Heart right ventricle (tissue), 16 donors: ENCODE measurements at regions of chr11 and their contacts with region 1.

Region 1: GRCh38 chr11:75867775-75868374 is 52.9 kb downstream of the UVRAG start:
- DNase-seq: peak in 1 of 2 donors; percentile 58
- ATAC-seq: peak; percentile 55 to 80 (median 68)
- H3K4me3 ChIP-seq: no peak overlapping the region
- H3K27ac ChIP-seq: no peak overlapping the region
- H3K4me1 ChIP-seq: peaks cover 5 to 34% (median 23%) of the 10 kb centered on the region in 9 donors
- H3K27me3 ChIP-seq: no peaks in the 10 kb centered on the region
- CTCF ChIP-seq: peak; percentile 72 to 89 (median 85)

Region 2: DNA sequence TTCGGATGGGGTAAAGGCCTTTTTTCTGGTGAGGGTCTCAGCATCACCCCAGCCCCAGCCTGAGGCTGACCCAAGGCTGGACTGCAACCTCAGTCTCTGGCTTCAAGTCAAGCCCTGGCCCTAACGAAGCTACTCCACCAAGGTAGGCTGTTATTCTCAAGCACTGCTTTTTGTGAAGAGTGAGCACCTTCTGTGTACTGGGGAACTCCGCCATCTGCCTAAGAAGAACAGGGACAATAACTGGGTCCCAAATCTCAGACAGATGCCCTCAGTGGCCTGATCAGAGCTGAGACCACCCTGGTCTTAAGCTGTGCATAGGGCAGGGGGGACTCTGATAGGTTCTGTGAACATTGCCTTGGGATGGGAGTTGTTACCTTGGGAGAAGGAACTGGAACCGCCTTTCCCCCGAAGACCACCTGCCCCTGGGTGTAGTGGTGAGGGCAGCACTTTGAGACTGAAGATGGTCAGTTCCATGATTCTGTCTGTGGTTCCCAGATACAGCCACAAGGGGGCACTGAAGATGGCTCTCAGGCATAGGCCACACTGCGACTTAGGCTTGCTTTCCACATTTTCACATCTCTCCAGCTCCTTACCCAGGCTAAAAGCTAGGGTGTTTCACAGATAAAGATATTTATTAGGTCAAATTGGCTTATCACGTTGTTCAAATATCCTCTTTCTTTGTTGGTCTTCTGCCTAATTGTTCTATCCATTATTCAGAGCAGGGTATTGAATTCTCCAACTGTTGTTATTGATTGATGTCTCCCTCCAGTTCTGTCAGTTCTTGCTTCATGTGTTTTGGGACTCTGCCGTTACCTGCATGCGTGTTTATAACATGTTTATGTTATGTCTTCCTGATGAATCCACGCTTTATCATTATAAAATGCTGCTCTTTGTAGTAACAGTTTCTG is 64.7 kb before region 1 on chr11:
- intact Hi-C with region 1: loop called (anchors 1 to 5 kb)
- DNase-seq: peak in 1 of 2 donors; percentile 82
- ATAC-seq: peak; percentile 75 to 94 (median 88)
- H3K4me3 ChIP-seq: no peak overlapping the region
- H3K27ac ChIP-seq: peak overlapping the region in 1 of 10 donors; percentile 26
- H3K4me1 ChIP-seq: peaks cover 0 to 22% (median 0%) of the 10 kb centered on the region in 9 donors
- H3K27me3 ChIP-seq: no peaks in the 10 kb centered on the region
- CTCF ChIP-seq: peak; percentile 80 to 95 (median 92)